ENCODE measurements at regions of chr6 and their contacts with region 1.

Region 1: GRCh38 chr6:43856005-43856765 is 86.2 kb downstream of the VEGFA start:
- DNase-seq: peak; percentile 51 to 79 (median 72)
- ATAC-seq: peak; percentile 82 to 93 (median 88)
- H3K4me3 ChIP-seq: no peak overlapping the region
- H3K27ac ChIP-seq: no peak overlapping the region
- H3K4me1 ChIP-seq: no peaks in the 10 kb centered on the region
- H3K27me3 ChIP-seq: no peaks in the 10 kb centered on the region
- CTCF ChIP-seq: peak; percentile 25 to 56 (median 38)

Region 2: GRCh38 chr6:43402820-43403219 is 453.4 kb before region 1 on chr6:
- intact Hi-C with region 1: no loop called
- DNase-seq: no peak
- ATAC-seq: no peak
- H3K4me3 ChIP-seq: no peak overlapping the region
- H3K27ac ChIP-seq: no peak overlapping the region
- H3K4me1 ChIP-seq: no peaks in the 10 kb centered on the region
- H3K27me3 ChIP-seq: no peaks in the 10 kb centered on the region
- CTCF ChIP-seq: no peak

Region 3: DNA sequence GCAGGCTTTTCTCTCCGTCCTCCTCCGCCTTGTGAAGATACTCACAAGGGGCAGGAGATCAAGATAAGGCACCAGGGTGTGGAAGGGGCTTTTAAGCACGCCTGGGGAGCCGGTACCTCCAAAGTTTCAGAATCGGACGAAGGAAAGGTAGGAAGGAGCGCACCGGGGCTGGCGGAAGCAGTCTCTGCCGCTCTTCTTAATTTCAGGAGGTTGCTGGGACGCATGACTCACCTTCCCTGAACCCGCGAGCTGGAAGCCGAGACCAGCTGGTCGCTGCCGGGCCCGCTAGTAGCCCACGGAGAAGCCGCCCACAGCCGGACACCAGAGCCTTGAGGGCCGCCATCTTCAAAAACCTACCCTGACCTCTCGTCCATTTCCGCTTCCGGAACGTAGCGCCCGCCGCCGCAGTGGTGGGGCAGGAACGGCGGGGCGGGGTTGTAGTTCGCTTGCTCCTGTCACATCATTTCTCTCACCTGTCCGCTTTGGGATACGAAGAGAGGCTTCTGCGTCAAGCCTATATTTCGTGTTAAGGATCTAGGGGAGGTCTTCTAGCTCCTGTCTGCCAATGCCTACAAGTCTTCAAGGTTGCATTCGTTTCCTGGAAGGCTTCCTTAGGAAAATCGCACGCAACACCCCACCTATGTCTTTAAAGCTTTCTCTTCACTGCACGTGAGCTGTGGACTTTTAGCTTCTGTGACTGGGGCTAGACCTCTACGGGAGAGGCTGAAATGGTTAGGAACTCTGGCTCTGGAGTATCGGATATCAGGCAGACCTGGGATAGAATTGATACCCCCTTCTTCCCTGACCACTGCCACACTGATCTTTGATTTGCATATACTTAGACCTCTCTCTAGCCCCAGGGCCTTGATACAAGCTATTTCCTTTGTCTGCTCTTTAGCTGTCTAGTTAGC is 168.5 kb before region 1 on chr6 and contains the start of gene MRPS18A:
- intact Hi-C with region 1: no loop called
- DNase-seq: peak; percentile 69 to 90 (median 79)
- ATAC-seq: peak; percentile 98 to 100 (median 100)
- H3K4me3 ChIP-seq: peak within 1 kb of the TSS; percentile 56 to 94 (median 75)
- H3K27ac ChIP-seq: peak within 1 kb of the TSS in 2 of 4 donors; percentile 62 to 63
- H3K4me1 ChIP-seq: peaks cover 8 to 13% (median 10%) of the 10 kb centered on the region in 3 donors
- H3K27me3 ChIP-seq: no peaks in the 10 kb centered on the region
- CTCF ChIP-seq: no peak
- total RNA-seq, gene MRPS18A: 10.9 to 18.2 (median 14.3) TPM

Region 4: DNA sequence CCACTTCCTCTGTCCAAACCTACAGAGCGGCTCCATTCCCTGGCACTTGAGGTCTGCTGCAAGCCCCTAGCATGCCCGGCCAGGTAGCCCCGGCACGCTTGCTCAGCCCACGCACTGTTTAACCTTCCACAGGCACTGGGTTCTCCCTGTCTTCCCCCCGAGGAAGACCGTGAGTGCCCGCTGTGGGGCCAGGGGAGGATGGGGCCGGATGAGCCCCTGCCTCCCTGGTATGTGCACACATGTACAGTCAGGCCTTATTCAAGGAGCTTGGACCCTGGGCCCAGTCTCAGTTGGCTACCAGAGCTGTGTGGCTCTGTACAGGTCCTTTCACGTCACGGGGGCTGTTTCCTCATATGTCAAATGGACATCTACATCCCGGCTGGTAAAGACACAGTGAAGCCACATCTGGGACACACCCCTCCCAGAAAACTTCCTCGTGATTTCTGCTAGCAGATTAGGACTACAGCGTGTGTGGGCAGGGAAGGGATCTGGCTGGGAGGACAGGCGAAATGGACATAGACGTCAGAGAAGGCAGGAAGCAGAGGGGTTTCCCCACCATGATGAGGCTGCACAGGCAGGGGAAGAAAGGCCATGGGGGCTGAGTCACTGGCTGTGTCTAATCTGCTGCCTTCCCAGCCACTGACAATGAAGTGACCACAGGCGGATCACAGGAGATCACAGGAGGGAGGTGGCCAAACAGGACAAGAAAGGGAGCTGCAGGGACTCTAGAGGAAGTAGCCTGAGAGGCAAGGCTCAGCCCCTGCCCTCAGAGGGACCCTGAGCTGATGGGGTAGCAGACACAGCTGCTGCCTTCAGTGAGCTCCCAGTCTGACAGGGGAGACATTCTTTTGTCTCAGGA is 208.1 kb after region 1 on chr6:
- intact Hi-C with region 1: loop called in 1 of 3 experiments (anchors 10 kb)
- DNase-seq: peak in 2 of 6 donors; percentile 20 to 68
- ATAC-seq: peak in 3 of 4 donors; percentile 63 to 80 (median 79)
- H3K4me3 ChIP-seq: no peak overlapping the region
- H3K27ac ChIP-seq: no peak overlapping the region
- H3K4me1 ChIP-seq: no peaks in the 10 kb centered on the region
- H3K27me3 ChIP-seq: no peaks in the 10 kb centered on the region
- CTCF ChIP-seq: no peak

Region 5: DNA sequence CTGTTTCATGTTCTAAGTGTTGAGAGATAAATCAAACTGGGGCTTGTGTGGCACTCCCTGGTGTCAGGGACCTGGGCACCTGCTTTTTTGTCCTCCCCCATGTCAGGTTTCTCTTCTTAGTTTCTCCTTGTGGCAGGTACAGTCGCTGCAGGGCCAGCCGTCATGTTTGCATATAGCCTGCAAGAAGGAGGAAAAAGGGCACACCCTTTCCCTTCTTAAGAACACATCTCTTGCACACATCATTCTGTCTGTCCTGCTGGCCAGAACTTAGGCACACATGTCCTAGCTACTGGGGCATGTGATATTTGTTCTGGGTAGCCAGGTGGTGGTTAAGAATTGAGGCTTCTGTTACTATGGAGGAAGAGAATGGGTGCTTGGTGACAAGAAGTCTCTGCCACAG is 559.3 kb after region 1 on chr6:
- intact Hi-C with region 1: no loop called
- DNase-seq: no peak
- ATAC-seq: peak; percentile 26 to 50 (median 27)
- H3K4me3 ChIP-seq: no peak overlapping the region
- H3K27ac ChIP-seq: peak overlapping the region in 2 of 4 donors; percentile 1 to 59
- H3K4me1 ChIP-seq: peaks cover 4 to 21% (median 5%) of the 10 kb centered on the region in 3 donors
- H3K27me3 ChIP-seq: no peaks in the 10 kb centered on the region
- CTCF ChIP-seq: no peak

Measured in pancreas (tissue), 10 donors.